ENCODE measurements at regions of chr10 and their contacts with region 1.

Region 1: GRCh38 chr10:13299437-13300287 is at the start of gene PHYH:
- DNase-seq: peak; percentile 83
- H3K4me3 Mint-ChIP-seq: peak within 1 kb of the TSS; percentile 80
- H3K27ac Mint-ChIP-seq: no peak within 1 kb of the TSS
- H3K4me1 Mint-ChIP-seq: peaks cover 5% of the 10 kb centered on the region
- H3K27me3 Mint-ChIP-seq: no peaks in the 10 kb centered on the region
- CTCF ChIP-seq: no peak
- total RNA-seq, gene PHYH: 9.8 and 13.7 TPM in 2 replicates

Region 2: GRCh38 chr10:13160934-13161856 is 138.5 kb before region 1 on chr10 and contains the start of gene MCM10:
- CTCF ChIA-PET with region 1: interaction called, 39 read pairs
- POLR2A ChIA-PET with region 1: interaction called, 9 read pairs
- intact Hi-C with region 1: loop called (anchors 1 kb)
- DNase-seq: peak; percentile 99
- H3K4me3 Mint-ChIP-seq: peak within 1 kb of the TSS; percentile 85
- H3K27ac Mint-ChIP-seq: peak within 1 kb of the TSS; percentile 81
- H3K4me1 Mint-ChIP-seq: peaks cover 19% of the 10 kb centered on the region
- H3K27me3 Mint-ChIP-seq: no peaks in the 10 kb centered on the region
- CTCF ChIP-seq: peak; percentile 79
- total RNA-seq, gene MCM10: 3.5 and 6.0 TPM in 2 replicates

Region 3: DNA sequence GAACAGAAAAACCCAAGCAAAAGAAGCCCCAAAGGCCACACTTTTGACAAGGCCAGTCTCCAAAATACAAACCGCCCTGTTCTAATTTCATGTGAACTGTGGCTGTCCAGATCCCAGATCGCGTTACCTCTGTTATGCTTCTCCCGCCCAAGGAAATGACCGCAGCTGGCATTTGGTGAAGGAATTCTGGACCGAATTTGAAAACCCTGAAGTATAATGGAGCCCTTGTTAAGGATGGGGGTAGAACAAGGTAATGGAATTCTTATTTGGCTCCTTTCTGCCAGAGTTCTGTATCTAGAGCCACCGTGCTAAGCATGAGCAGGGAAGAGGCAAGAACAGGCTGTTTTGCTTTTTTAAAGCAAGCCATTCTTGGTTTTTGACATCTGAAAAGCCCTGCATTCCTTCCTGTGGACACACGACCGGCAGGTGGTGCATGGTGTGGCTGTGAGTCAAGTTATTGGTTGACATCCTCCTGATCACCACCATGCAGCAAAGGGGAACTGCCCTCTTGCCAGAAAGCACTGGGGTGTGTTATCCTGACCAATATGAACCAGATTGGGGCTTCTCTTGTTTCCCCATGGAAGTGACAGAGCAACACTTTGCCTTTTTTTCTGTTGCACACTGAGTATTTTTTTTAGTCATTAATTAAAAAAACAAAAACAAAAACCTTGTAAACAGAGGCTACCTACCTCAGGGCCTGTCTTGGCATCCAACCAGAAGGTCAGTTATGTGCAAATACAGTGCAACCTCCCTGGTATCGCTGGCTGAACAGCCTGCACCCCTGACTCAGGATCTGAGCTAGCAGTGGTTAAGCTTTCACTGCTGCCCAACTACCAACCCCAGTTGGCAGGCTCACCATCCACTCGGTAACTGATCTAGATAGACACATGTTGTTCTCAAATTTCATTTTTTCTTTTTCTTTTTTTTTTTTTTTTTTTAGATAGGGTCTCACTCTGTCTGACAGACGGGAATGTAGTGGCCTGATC is 79.7 kb before region 1 on chr10:
- CTCF ChIA-PET with region 1: no interaction called
- POLR2A ChIA-PET with region 1: no interaction called
- intact Hi-C with region 1: loop called (anchors 5 kb)
- DNase-seq: peak; percentile 43
- H3K4me3 Mint-ChIP-seq: no peak overlapping the region
- H3K27ac Mint-ChIP-seq: no peak overlapping the region
- H3K4me1 Mint-ChIP-seq: no peaks in the 10 kb centered on the region
- H3K27me3 Mint-ChIP-seq: no peaks in the 10 kb centered on the region
- CTCF ChIP-seq: peak; percentile 15

Region 4: DNA sequence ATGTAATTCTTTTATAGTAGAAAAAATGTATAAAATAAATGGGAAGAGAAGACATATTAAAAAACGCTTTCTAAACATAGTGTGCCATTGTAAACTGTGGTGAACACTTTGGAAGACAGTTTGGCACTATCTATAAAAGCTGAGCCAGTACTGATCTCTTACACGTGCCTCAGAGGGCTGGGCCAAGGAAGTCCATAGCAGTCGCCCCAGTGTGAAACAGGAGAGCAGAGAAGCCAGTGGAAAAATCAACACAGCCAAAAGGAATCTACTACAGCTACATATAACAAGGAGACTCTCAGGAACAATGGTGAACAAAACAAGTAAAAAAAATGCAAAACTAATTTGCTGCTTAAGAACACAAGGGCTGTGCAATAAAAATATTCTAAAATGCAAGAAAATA is 27.9 kb after region 1 on chr10:
- CTCF ChIA-PET with region 1: interaction called, 9 read pairs
- POLR2A ChIA-PET with region 1: interaction called, 11 read pairs
- intact Hi-C with region 1: no loop called
- DNase-seq: no peak
- H3K4me3 Mint-ChIP-seq: no peak overlapping the region
- H3K27ac Mint-ChIP-seq: no peak overlapping the region
- H3K4me1 Mint-ChIP-seq: no peaks in the 10 kb centered on the region
- H3K27me3 Mint-ChIP-seq: no peaks in the 10 kb centered on the region
- CTCF ChIP-seq: no peak